Activated T-helper 1 cell treated with anti-CD3 and anti-CD28 coated beads, Interleukin-12 subunit alpha, Interleukin-12 subunit beta, Interleukin-2, Interleukin-4 antibody, amounts not matched to agents 30 ng/mL and 10 ng/mL and 1 ng/mL, durations not matched to agents 14 hours and 24 hours and 36 hours (primary cell): ENCODE measurements at regions of chr4 and their contacts with region 1.

Region 1: DNA sequence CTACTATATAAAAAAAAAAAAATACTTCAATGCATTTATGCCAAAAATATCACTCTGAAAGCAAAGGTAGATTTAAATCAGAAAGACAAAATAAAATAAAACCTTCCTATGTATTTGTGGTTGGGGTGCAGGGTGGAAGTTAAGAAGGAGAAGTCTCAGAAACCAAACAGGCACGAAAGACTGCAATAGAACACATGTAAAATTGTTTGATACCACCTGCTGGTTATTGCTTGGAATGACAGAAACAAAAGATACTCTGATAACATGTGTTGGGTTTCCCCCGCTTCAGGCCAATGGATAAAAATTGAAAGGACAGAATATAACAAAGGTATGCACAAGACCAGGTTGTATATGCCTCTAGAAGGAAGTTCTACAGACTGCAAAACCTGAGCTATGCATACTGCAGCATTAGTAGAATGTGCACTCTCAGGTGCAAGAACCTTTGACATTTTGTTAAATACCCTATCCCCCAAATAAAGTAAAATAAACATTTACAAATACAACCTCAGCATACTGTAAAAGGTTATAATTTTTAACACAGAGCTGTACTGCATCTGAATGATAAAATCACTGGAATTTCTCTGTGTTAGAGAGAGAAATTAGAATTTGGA is 118.8 kb downstream of the GABRA2 start:
- DNase-seq: no peak
- H3K4me3 Mint-ChIP-seq: no peak overlapping the region
- H3K27ac Mint-ChIP-seq: no peak overlapping the region
- H3K4me1 Mint-ChIP-seq: no peaks in the 10 kb centered on the region
- H3K27me3 Mint-ChIP-seq: no peaks in the 10 kb centered on the region

Region 2: GRCh38 chr4:44760142-44760898 is 1510.8 kb before region 1 on chr4:
- intact Hi-C with region 1: loop called (anchors 5 kb)
- DNase-seq: no peak
- H3K4me3 Mint-ChIP-seq: no peak overlapping the region
- H3K27ac Mint-ChIP-seq: no peak overlapping the region
- H3K4me1 Mint-ChIP-seq: no peaks in the 10 kb centered on the region
- H3K27me3 Mint-ChIP-seq: peaks cover 2% of the 10 kb centered on the region